Ascending aorta (tissue), 2 donors: ENCODE measurements at regions of chr4 and their contacts with region 1.

Region 1: DNA sequence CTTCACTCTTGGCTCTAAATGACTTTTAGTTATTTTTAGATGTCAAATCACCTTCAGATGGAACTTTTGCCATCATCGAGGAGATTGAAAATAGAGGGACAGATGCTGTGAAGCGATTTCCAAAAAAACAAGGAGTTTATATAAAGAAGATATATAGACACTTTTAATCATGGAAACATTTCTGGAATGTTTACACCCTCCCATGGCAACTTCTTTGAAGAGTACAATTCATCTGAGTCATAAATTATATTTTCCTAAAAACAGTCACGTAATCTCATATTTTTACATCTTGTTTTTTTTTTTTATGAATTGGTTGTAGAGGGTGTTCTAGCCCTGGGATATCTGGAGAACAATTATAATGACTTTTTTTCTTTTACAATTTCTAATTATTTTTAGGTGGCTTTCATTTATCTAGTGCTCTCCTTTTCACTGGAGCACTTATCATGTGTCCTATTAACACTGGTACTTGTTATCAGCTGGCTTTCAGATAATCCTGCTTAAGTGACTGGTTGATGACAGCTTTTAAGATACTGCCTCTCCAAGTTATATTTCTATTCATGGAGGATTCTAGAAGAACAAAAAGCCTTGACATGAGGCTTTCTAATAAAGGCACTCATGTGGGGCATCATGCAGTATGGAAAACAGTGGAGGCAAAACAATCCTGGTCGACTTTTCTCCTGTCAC is 24.9 kb downstream of the PCDH7 start:
- DNase-seq: no peak
- H3K4me3 ChIP-seq: no peak overlapping the region
- H3K27ac ChIP-seq: peak overlapping the region; percentile 79 to 87
- H3K4me1 ChIP-seq: peaks cover 3 to 27% of the 10 kb centered on the region in 2 donors
- H3K27me3 ChIP-seq: no peaks in the 10 kb centered on the region
- CTCF ChIP-seq: no peak

Region 2: DNA sequence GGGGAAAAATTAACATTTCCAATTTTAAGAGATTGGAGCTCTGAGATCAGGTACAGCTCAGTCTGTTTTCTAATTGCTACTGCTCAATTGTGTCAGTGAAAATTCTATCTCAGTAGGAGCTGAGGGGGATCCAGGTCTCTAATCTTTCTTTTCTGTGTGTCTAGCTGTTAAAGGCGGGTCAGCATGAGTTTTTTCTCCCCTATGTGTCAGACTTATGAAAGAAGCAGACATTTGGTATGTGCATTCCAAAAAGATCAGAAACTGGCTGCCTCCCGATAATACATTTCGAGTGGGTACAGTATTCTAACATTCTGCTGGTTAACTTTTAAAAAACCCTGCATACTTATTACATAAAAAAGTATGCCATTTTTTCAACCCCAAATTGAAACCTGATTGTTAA is 47.5 kb after region 1 on chr4:
- intact Hi-C with region 1: loop called (anchors 5 kb)
- DNase-seq: no peak
- H3K4me3 ChIP-seq: no peak overlapping the region
- H3K27ac ChIP-seq: no peak overlapping the region
- H3K4me1 ChIP-seq: peaks cover 0 to 10% of the 10 kb centered on the region in 2 donors
- H3K27me3 ChIP-seq: no peaks in the 10 kb centered on the region
- CTCF ChIP-seq: no peak